Activated naive CD4-positive, alpha-beta T cell treated with anti-CD3 and anti-CD28 coated beads for 36 hours (primary cell): ENCODE measurements at regions of chr21 and their contacts with region 1.

Region 1: DNA sequence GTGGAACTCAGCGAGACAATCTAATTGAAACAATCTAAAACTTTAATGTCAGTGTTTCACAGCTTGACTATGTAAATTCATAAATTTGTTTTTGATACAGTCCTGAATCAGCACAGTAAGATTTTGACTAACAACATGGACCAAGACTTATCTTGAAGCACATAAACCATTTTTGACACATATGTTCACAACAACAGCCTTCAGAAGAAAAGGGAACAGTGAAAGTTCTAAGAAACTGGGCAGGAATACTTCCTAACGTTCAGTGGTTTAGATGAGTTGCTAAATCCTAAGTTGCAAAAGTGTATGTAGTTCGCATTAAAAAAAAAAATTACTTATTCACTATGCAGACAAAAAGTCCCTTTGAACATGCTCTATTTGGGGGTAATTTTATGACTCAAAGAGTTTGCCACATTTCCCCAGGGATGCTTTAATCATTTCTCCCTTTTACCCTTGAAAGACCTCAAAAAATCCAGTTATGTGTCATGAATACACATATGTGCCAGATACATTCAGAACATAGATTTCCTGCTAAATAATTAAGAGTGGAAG is 120.2 kb downstream of the MRPL39 start:
- DNase-seq: no peak
- H3K4me3 Mint-ChIP-seq: peak overlapping the region; percentile 14
- H3K27ac Mint-ChIP-seq: peak overlapping the region; percentile 74
- H3K4me1 Mint-ChIP-seq: peaks cover 65% of the 10 kb centered on the region
- H3K27me3 Mint-ChIP-seq: no peaks in the 10 kb centered on the region

Region 2: DNA sequence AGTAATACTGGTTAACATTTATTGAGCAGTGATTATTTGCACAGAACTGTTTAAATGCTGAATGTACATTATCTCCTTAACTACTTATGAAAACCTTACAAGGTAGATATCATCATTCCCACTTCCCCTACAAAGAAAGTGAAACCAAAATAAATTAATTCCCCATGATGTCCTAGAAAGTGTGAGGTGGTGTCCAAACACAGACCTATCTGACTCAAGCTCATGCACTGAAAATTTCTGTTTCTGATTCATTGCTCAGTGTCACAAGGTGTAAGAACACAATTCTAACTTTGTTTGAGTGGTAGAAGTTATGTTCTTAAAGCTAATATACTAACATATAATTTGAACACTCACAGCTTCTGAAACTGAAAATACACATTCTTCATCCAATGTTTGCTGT is 58.6 kb before region 1 on chr21:
- CTCF ChIA-PET with region 1: interaction called, 3 read pairs
- intact Hi-C with region 1: loop called (anchors 1 kb)
- DNase-seq: no peak
- H3K4me3 Mint-ChIP-seq: peak overlapping the region; percentile 44
- H3K27ac Mint-ChIP-seq: peak overlapping the region; percentile 64
- H3K4me1 Mint-ChIP-seq: peaks cover 48% of the 10 kb centered on the region
- H3K27me3 Mint-ChIP-seq: peaks cover 2% of the 10 kb centered on the region

Region 3: DNA sequence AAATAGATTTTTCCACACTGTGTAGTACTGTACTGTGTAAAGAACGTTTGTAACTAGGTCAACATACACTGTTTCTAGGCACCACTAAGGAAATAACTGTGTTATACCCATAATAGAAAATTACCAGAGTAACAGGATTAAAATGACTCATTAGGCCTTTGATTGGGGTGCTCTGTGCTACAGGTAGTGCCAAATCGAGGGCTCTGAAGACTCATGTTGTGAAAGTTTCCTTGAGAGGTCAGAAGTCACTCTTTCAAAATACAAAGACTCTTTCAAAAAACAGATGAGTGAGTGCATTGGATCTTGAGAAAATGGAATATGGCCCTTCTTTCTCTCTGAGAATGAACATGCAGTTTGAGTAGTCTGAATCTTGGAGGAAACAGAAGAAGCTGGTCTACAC is 22.8 kb before region 1 on chr21:
- CTCF ChIA-PET with region 1: interaction called, 5 read pairs
- intact Hi-C with region 1: loop called (anchors 1 kb)
- DNase-seq: peak; percentile 51
- H3K4me3 Mint-ChIP-seq: peak overlapping the region; percentile 11
- H3K27ac Mint-ChIP-seq: peak overlapping the region; percentile 90
- H3K4me1 Mint-ChIP-seq: peaks cover 69% of the 10 kb centered on the region
- H3K27me3 Mint-ChIP-seq: no peaks in the 10 kb centered on the region

Region 4: GRCh38 chr21:25507522-25507921 is 20.4 kb after region 1 on chr21:
- CTCF ChIA-PET with region 1: interaction called, 12 read pairs
- intact Hi-C with region 1: loop called (anchors 1 kb)
- DNase-seq: peak; percentile 55
- H3K4me3 Mint-ChIP-seq: no peak overlapping the region
- H3K27ac Mint-ChIP-seq: peak overlapping the region; percentile 70
- H3K4me1 Mint-ChIP-seq: peaks cover 75% of the 10 kb centered on the region
- H3K27me3 Mint-ChIP-seq: no peaks in the 10 kb centered on the region

Region 5: DNA sequence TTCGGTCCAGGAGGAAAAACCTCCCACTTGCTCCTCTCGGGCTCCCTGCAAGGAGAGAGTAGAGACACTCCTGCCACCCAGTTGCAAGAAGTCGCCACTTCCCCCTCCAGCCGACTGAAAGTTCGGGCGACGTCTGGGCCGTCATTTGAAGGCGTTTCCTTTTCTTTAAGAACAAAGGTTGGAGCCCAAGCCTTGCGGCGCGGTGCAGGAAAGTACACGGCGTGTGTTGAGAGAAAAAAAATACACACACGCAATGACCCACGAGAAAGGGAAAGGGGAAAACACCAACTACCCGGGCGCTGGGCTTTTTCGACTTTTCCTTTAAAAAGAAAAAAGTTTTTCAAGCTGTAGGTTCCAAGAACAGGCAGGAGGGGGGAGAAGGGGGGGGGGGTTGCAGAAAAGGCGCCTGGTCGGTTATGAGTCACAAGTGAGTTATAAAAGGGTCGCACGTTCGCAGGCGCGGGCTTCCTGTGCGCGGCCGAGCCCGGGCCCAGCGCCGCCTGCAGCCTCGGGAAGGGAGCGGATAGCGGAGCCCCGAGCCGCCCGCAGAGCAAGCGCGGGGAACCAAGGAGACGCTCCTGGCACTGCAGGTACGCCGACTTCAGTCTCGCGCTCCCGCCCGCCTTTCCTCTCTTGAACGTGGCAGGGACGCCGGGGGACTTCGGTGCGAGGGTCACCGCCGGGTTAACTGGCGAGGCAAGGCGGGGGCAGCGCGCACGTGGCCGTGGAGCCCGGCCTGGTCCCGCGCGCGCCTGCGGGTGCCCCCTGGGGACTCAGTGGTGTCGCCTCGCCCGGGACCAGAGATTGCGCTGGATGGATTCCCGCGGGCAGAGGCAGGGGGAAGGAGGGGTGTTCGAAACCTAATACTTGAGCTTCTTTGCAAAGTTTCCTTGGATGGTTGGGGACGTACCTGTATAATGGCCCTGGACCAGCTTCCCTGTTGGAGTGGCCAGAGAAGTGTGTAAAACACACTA is 74.8 kb after region 1 on chr21:
- CTCF ChIA-PET with region 1: interaction called, 4 read pairs
- intact Hi-C with region 1: loop called (anchors 1 kb)
- DNase-seq: peak; percentile 81
- H3K4me3 Mint-ChIP-seq: peak overlapping the region; percentile 91
- H3K27ac Mint-ChIP-seq: peak overlapping the region; percentile 96
- H3K4me1 Mint-ChIP-seq: peaks cover 45% of the 10 kb centered on the region
- H3K27me3 Mint-ChIP-seq: no peaks in the 10 kb centered on the region

Region 6: GRCh38 chr21:25584833-25585676 is 97.9 kb after region 1 on chr21:
- CTCF ChIA-PET with region 1: no interaction called
- intact Hi-C with region 1: no loop called
- DNase-seq: no peak
- H3K4me3 Mint-ChIP-seq: no peak overlapping the region
- H3K27ac Mint-ChIP-seq: no peak overlapping the region
- H3K4me1 Mint-ChIP-seq: peaks cover 28% of the 10 kb centered on the region
- H3K27me3 Mint-ChIP-seq: no peaks in the 10 kb centered on the region